ENCODE measurements at regions of chr2 and their contacts with region 1.

Region 1: DNA sequence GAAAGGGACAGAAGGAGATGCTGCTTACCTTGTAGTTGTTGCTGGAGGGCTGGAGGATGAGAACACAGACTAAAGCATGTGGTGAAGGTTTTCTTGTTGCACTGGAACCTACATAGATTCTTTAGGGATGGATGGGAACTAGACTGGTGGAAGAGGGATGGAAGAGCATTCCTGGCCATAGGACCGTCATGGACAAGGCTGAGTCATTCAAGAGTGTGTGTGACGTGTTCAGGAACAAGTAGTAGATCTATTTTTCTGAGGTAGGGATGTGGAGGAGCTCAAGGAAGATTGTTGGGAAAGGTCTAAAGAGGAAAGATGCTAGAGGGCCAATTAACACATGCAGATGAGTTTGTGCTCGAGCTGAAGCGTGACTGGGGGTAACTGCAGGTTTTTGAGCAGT is 6.6 kb downstream of the STAT4 start:
- DNase-seq: no peak
- ATAC-seq: no peak
- H3K4me3 ChIP-seq: no peak overlapping the region
- H3K4me3 Mint-ChIP-seq: peak overlapping the region; percentile 11 to 63 (median 49)
- H3K27ac ChIP-seq: no peak overlapping the region
- H3K27ac Mint-ChIP-seq: peak overlapping the region in 8 of 9 donors; percentile 5 to 43 (median 30)
- H3K4me1 ChIP-seq: peaks cover 45% of the 10 kb centered on the region in 2 donors
- H3K4me1 Mint-ChIP-seq: peaks cover 51 to 90% (median 81%) of the 10 kb centered on the region in 7 donors
- H3K27me3 ChIP-seq: no peaks in the 10 kb centered on the region
- H3K27me3 Mint-ChIP-seq: no peaks in the 10 kb centered on the region

Region 2: GRCh38 chr2:191103774-191104173 is 40.4 kb before region 1 on chr2:
- CTCF ChIA-PET with region 1: no interaction called
- POLR2A ChIA-PET with region 1: interaction called, 5 read pairs
- intact Hi-C with region 1: loop called in 1 of 2 experiments (anchors 5 kb)
- DNase-seq: no peak
- ATAC-seq: no peak
- H3K4me3 ChIP-seq: no peak overlapping the region
- H3K4me3 Mint-ChIP-seq: no peak overlapping the region
- H3K27ac ChIP-seq: no peak overlapping the region
- H3K27ac Mint-ChIP-seq: peak overlapping the region in 1 of 9 donors; percentile 2
- H3K4me1 ChIP-seq: peaks cover 0 to 8% of the 10 kb centered on the region in 2 donors
- H3K4me1 Mint-ChIP-seq: peaks cover 10 to 52% (median 34%) of the 10 kb centered on the region in 7 donors
- H3K27me3 ChIP-seq: no peaks in the 10 kb centered on the region
- H3K27me3 Mint-ChIP-seq: no peaks in the 10 kb centered on the region

Region 3: DNA sequence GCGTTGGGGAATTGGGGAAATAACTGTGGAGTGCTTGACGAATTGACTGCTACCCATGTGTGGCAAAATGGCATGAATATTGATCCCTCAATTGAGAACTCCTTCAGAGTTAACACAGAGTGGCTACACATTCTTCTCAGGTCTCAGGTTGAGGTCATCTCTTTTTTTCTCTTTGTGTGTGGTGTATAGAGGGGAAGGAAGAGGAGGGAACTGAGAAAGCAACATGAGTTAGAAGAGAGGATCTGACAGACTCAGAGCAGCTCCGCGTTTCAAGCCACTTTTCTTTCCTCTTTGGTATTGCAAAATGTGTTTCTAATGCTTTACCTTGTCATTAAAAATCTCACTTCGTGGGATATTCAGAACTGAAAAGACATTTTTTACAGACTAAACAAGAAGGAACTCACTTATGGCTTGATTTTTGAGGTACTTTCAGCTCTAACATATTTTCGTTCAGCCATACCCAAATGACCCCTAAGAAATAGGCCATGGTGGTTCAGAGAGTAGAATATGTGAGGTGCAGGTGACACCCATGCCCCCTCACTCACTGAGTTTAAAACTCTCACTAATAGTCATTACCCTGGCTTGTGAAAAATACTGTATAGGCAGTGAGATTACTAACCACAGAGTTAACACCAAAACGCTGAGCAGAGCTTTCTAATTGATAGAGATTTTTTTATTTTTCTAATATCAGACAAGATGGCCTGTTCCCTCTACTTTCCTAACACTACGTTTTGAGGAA is 15.9 kb before region 1 on chr2:
- CTCF ChIA-PET with region 1: interaction called, 3 read pairs
- POLR2A ChIA-PET with region 1: interaction called, 3 read pairs
- intact Hi-C with region 1: loop called (anchors 1 to 2 kb)
- DNase-seq: no peak
- ATAC-seq: peak; percentile 79
- H3K4me3 ChIP-seq: no peak overlapping the region
- H3K4me3 Mint-ChIP-seq: peak overlapping the region in 8 of 10 donors; percentile 7 to 58 (median 44)
- H3K27ac ChIP-seq: peak overlapping the region; percentile 58
- H3K27ac Mint-ChIP-seq: peak overlapping the region; percentile 18 to 86 (median 76)
- H3K4me1 ChIP-seq: peaks cover 12 to 35% of the 10 kb centered on the region in 2 donors
- H3K4me1 Mint-ChIP-seq: peaks cover 29 to 79% (median 65%) of the 10 kb centered on the region in 7 donors
- H3K27me3 ChIP-seq: no peaks in the 10 kb centered on the region
- H3K27me3 Mint-ChIP-seq: no peaks in the 10 kb centered on the region